ENCODE measurements at regions of chr2 and their contacts with region 1.

Region 1: GRCh38 chr2:151828143-151828889 is at the start of gene ARL5A:
- DNase-seq: peak; percentile 97
- ATAC-seq: peak; percentile 99
- total RNA-seq, gene ARL5A: 47.9 TPM

Region 2: GRCh38 chr2:151922845-151923666 is 94.7 kb after region 1 on chr2:
- intact Hi-C with region 1: loop called (anchors 1 kb)
- DNase-seq: peak; percentile 88
- ATAC-seq: peak; percentile 81

Region 3: DNA sequence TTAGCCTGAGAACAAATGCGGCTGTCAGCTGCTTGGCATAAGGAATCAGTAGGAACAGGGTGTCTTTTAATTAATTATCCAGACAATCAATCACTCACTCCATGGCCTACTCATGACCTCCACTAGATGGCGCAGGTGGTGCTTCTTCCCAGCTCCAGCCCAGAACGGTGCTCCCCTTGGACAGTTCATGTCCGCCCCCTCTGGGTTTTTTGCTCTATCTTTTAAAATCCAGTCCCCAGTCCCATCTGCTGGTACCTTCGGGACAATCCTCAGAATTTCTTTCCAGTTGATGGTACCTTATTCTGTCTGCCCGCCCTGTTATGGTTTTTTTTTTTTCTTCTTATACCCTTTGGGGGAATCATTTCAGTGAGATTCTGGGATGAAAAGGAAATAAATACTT is 170.7 kb after region 1 on chr2:
- intact Hi-C with region 1: loop called (anchors 5 kb)
- DNase-seq: no peak
- ATAC-seq: no peak

Region 4: DNA sequence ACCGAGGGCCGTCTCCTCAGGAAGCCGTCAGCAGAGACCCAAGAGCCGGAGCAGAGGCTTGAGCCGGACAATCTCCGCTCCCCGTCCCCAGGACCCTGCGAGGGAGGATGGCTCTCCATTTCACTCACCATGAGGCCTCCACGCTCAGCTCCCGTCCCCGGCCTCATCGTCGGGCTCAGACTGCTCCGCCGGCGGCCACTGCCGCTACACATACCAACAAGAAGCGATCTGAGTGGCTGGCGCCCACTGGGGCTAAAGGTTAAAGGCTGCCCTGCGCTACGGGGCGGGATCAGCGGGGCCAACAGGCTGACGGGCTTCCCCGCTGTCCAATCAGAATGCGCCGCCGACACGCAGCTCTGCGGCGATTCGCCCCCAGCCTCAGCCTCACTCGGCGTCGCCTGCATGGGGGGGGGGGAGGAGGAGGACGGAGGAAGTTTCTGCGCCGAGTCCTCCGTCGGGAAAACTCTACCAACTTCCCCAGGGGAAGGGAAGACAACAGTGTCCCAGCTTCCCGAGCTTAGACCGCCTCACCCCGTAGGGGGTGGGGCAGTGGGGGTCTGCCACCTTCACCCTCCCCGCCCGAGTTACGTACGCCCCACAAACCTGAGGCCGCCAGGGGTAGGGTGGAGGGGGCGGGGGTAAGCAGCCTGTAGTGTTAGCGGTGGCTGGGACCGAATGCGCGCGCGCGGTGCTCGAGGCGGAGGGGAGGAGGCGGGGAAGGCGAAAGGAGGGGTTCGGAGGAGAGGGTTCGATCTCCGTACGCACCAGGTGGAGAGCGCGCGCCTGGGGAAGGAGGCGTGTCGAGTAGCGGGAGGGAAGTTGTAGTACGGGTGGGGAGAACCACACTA is 889.1 kb after region 1 on chr2 and contains the start of gene PRPF40A:
- intact Hi-C with region 1: loop called (anchors 10 kb)
- DNase-seq: peak; percentile 98
- ATAC-seq: peak; percentile 94
- total RNA-seq, gene PRPF40A: 36.0 TPM